Common myeloid progenitor, CD34-positive (primary cell): ENCODE measurements at regions of chr20 and their contacts with region 1.

Region 1: DNA sequence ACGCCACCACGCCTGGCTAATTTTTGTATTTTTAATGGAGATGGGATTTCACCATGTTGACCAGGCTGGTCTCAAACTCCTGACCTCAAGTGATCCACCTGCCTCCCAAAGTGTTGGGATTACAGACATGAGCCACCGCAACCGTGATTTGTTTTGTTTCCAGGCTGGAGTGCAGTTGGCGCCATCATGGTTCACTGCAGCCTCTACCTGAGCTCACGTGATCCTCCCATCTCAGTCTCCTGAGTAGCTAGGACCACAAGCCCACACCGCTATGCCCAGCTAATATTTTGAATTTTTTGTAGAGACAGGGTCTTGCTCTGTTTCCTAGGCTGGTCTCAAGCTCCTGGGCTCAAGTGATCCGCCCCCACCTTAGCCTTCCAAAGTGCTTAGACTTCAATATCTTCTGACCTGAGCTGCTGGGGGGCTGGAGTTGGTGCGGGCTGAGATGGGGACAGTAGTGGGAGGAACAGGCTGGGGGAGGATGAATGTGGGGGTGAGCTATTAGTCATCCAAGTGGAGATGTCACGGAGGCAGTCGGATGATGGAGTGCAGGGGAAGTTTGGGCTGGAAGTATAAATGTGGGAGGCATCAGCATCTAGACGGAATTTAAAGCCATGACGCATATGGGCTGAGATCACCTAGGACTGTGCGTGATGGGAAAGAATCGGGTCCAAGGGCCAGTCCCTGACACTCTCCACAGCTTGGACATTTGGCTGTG is 23.1 kb upstream of the ZMYND8 start:
- DNase-seq: no peak
- H3K4me3 ChIP-seq: no peak overlapping the region
- H3K27ac ChIP-seq: no peak overlapping the region
- H3K4me1 ChIP-seq: peaks cover 0 to 8% (median 1%) of the 10 kb centered on the region in 4 experiments
- H3K27me3 ChIP-seq: no peaks in the 10 kb centered on the region

Region 2: GRCh38 chr20:47196091-47197081 is 183.2 kb before region 1 on chr20:
- CTCF ChIA-PET with region 1: interaction called, 10 read pairs
- POLR2A ChIA-PET with region 1: no interaction called
- DNase-seq: peak; percentile 73 to 81 (median 79)
- H3K4me3 ChIP-seq: peak overlapping the region in 2 of 7 experiments; percentile 26 to 43
- H3K27ac ChIP-seq: no peak overlapping the region
- H3K4me1 ChIP-seq: peaks cover 0 to 6% (median 3%) of the 10 kb centered on the region in 4 experiments
- H3K27me3 ChIP-seq: peaks cover 0 to 4% (median 0%) of the 10 kb centered on the region in 5 experiments

Region 3: DNA sequence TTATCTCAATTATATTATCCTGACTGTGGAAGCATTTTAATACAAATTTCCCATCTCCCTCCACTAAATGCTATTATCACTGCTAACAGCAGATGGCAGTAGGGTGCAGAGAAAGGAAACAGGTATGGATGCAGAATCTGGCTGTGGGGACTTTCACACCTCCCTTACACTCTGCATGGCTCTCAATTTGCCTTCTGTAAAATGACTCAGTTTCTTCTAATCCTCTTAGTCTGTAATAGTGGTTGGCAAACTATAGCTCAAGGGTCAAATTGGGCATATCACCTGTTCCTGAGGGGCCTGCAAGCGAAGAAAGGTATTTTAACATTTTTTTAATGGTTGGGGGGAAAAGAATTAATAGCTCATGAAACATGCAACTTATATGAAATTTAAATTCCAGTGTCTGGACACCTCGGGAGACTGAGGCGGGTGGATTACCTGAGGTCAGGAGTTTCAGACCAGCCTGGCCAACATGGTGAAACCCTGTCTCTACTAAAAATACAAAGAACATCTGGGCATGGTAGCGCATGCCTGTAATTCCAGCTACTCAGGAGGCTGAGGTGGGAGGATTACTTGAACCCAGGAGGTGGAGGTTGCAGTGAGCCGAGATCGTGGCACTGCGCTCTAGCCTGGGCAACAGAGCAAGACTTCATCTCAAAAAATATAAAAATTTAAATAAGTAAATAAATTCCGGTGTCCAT is 106.5 kb before region 1 on chr20:
- CTCF ChIA-PET with region 1: interaction called, 312 read pairs
- POLR2A ChIA-PET with region 1: interaction called, 5 read pairs
- DNase-seq: peak; percentile 64 to 77 (median 65)
- H3K4me3 ChIP-seq: no peak overlapping the region
- H3K27ac ChIP-seq: no peak overlapping the region
- H3K4me1 ChIP-seq: peaks cover 0 to 19% (median 4%) of the 10 kb centered on the region in 4 experiments
- H3K27me3 ChIP-seq: no peaks in the 10 kb centered on the region

Region 4: GRCh38 chr20:47296950-47297349 is 82.6 kb before region 1 on chr20:
- CTCF ChIA-PET with region 1: interaction called, 37 read pairs
- POLR2A ChIA-PET with region 1: no interaction called
- DNase-seq: peak in 2 of 3 donors; percentile 39 to 44
- H3K4me3 ChIP-seq: no peak overlapping the region
- H3K27ac ChIP-seq: no peak overlapping the region
- H3K4me1 ChIP-seq: no peaks in the 10 kb centered on the region
- H3K27me3 ChIP-seq: no peaks in the 10 kb centered on the region

Region 5: DNA sequence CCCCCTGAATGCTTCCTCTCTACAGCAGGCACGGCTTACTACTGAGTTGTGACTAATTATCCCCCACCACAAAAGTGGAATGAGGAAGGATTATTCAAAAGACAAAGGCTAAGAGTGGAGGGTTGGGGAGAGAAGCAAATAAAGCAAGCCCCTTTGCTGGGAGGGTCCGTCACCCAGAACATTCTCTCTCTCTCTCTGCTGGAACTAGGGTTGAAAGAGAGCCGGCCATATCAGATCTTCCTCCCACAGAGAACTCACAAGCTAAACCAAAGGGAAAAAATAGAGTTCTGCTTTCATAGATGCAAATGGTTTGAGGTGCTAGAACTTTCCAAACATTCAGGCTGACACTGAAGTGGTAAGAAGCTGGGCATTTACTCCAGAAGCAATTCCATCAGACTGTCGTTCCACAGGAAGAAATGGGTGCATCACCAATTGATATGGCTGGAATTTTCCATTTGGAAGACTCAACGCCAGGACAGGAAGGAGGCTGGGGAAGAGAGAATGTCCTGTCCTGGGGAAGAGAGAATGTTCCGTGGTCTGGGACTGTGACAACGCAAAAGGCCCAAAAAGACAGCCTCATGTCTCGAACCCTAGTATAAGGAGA is 31.0 kb before region 1 on chr20:
- CTCF ChIA-PET with region 1: interaction called, 12 read pairs
- POLR2A ChIA-PET with region 1: interaction called, 3 read pairs
- DNase-seq: peak in 2 of 3 donors; percentile 61 to 69
- H3K4me3 ChIP-seq: peak overlapping the region in 2 of 7 experiments; percentile 29 to 61
- H3K27ac ChIP-seq: peak overlapping the region in 1 of 2 experiments; percentile 79
- H3K4me1 ChIP-seq: peaks cover 54 to 68% (median 60%) of the 10 kb centered on the region in 4 experiments
- H3K27me3 ChIP-seq: no peaks in the 10 kb centered on the region

Region 6: DNA sequence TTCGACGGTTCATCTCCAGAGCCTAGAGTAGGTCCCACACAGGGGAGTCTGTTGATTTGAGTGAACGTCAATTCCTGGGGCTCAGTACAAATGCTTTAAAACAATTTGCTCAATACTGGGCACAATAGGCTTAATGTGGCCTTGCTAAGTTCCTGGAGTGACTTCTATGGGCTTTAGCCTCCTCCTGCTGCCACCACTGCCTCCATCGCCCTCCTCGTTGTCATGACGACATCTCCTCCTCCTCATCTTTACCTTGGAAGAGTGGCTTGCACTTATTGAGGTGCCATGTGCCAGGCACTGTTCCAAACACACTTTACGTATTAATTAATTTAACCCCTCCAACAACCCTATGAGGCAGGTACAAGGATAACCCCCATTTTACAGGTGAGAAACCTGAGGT is 11.3 kb before region 1 on chr20:
- CTCF ChIA-PET with region 1: interaction called, 76 read pairs
- POLR2A ChIA-PET with region 1: interaction called, 3 read pairs
- DNase-seq: no peak
- H3K4me3 ChIP-seq: no peak overlapping the region
- H3K27ac ChIP-seq: no peak overlapping the region
- H3K4me1 ChIP-seq: peaks cover 0 to 19% (median 11%) of the 10 kb centered on the region in 4 experiments
- H3K27me3 ChIP-seq: no peaks in the 10 kb centered on the region

Region 7: DNA sequence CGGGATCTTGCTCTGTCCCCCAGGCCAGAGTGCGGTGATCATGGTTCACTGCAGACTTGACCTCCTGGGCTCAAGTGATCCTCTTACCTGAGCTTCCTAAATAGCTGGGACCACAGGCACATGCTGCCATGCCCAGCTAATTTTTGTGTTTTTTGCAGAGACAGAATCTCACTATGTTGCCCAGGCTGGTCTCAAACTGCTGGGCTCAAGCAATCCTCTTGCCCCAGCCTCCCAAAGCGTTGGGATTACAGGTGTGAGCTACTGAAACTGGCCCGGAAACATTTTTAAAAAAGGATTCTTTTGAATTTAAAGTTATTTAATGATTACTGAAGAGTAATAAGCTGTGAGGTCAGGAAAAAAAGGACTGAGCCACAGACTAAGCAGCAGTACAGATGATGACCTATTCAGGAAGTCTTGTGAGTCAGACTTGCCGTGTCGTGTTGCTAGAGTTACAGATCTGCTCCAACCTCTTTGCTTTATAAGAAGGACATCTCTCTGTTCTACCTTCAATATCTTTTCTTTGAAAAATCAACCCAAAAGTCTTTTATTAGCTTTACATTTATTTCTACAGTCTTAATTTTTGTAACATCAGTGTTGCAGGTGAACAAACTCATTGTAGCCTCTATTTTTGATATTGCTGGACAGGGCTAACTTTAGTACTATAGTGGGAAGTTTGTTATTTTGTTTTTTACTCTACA is 230.8 kb after region 1 on chr20:
- CTCF ChIA-PET with region 1: interaction called, 12 read pairs
- POLR2A ChIA-PET with region 1: interaction called, 3 read pairs
- DNase-seq: peak; percentile 77 to 94 (median 87)
- H3K4me3 ChIP-seq: peak overlapping the region in 2 of 7 experiments; percentile 30 to 45
- H3K27ac ChIP-seq: peak overlapping the region; percentile 68 to 85
- H3K4me1 ChIP-seq: peaks cover 7 to 21% (median 15%) of the 10 kb centered on the region in 4 experiments
- H3K27me3 ChIP-seq: no peaks in the 10 kb centered on the region